B cell (primary cell): ENCODE measurements at regions of chrX and their contacts with region 1.

Region 1: GRCh38 chrX:130079824-130080406 is 30.4 kb downstream of the ELF4 start:
- DNase-seq: peak; percentile 69
- ATAC-seq: no peak
- H3K4me3 ChIP-seq: no peak overlapping the region
- H3K4me3 Mint-ChIP-seq: no peak overlapping the region
- H3K27ac ChIP-seq: no peak overlapping the region
- H3K27ac Mint-ChIP-seq: peak overlapping the region; percentile 47
- H3K4me1 ChIP-seq: peaks cover 32 to 40% of the 10 kb centered on the region in 2 donors
- H3K4me1 Mint-ChIP-seq: peaks cover 41% of the 10 kb centered on the region
- H3K27me3 ChIP-seq: no peaks in the 10 kb centered on the region
- H3K27me3 Mint-ChIP-seq: no peaks in the 10 kb centered on the region
- CTCF ChIP-seq: peak; percentile 72

Region 2: GRCh38 chrX:129786210-129786651 is 293.7 kb before region 1 on chrX:
- CTCF ChIA-PET with region 1: no interaction called
- POLR2A ChIA-PET with region 1: no interaction called
- intact Hi-C with region 1: no loop called
- DNase-seq: peak; percentile 78
- ATAC-seq: peak; percentile 73
- H3K4me3 ChIP-seq: peak overlapping the region in 4 of 5 experiments; percentile 8 to 46 (median 24)
- H3K4me3 Mint-ChIP-seq: peak overlapping the region; percentile 85
- H3K27ac ChIP-seq: peak overlapping the region; percentile 24 to 66
- H3K27ac Mint-ChIP-seq: peak overlapping the region; percentile 95
- H3K4me1 ChIP-seq: peaks cover 60 to 67% of the 10 kb centered on the region in 2 donors
- H3K4me1 Mint-ChIP-seq: peaks cover 59% of the 10 kb centered on the region
- H3K27me3 ChIP-seq: no peaks in the 10 kb centered on the region
- H3K27me3 Mint-ChIP-seq: no peaks in the 10 kb centered on the region
- CTCF ChIP-seq: no peak

Region 3: DNA sequence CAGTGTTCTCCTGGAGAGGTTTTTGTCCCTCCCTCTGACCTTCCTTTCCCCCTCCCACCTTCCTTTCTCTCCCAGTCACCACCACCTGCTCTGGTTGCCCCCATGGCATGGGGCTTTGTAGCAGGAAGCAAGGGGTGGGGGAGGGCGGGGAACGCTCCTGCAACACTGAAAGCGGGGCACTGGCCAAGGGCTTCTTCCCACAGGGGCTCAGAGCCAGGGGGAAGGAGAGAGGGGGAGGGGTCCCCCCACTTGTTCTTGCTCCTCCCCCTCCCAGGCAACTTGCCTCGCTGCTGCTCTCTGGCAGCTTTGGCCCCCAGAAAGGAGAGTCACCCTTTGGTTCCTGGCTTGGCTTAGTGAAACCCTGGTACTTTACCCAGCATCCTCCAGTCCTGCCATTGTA is 49.1 kb before region 1 on chrX:
- CTCF ChIA-PET with region 1: no interaction called
- POLR2A ChIA-PET with region 1: no interaction called
- intact Hi-C with region 1: no loop called
- DNase-seq: no peak
- ATAC-seq: no peak
- H3K4me3 ChIP-seq: no peak overlapping the region
- H3K4me3 Mint-ChIP-seq: no peak overlapping the region
- H3K27ac ChIP-seq: no peak overlapping the region
- H3K27ac Mint-ChIP-seq: no peak overlapping the region
- H3K4me1 ChIP-seq: no peaks in the 10 kb centered on the region
- H3K4me1 Mint-ChIP-seq: peaks cover 2% of the 10 kb centered on the region
- H3K27me3 ChIP-seq: no peaks in the 10 kb centered on the region
- H3K27me3 Mint-ChIP-seq: no peaks in the 10 kb centered on the region
- CTCF ChIP-seq: no peak

Region 4: GRCh38 chrX:130097507-130098209 is 17.7 kb after region 1 on chrX:
- CTCF ChIA-PET with region 1: interaction called, 17 read pairs
- POLR2A ChIA-PET with region 1: interaction called, 9 read pairs
- intact Hi-C with region 1: loop called (anchors 1 kb)
- DNase-seq: no peak
- ATAC-seq: no peak
- H3K4me3 ChIP-seq: no peak overlapping the region
- H3K4me3 Mint-ChIP-seq: no peak overlapping the region
- H3K27ac ChIP-seq: peak overlapping the region in 1 of 2 donors; percentile 48
- H3K27ac Mint-ChIP-seq: peak overlapping the region; percentile 42
- H3K4me1 ChIP-seq: peaks cover 19 to 38% of the 10 kb centered on the region in 2 donors
- H3K4me1 Mint-ChIP-seq: peaks cover 56% of the 10 kb centered on the region
- H3K27me3 ChIP-seq: no peaks in the 10 kb centered on the region
- H3K27me3 Mint-ChIP-seq: no peaks in the 10 kb centered on the region
- CTCF ChIP-seq: no peak

Region 5: GRCh38 chrX:130120746-130121504 is 41.0 kb after region 1 on chrX:
- CTCF ChIA-PET with region 1: interaction called, 164 read pairs
- POLR2A ChIA-PET with region 1: interaction called, 7 read pairs
- intact Hi-C with region 1: loop called (anchors 1 kb)
- DNase-seq: peak; percentile 81
- ATAC-seq: peak; percentile 84
- H3K4me3 ChIP-seq: peak overlapping the region in 4 of 5 experiments; percentile 35 to 62 (median 48)
- H3K4me3 Mint-ChIP-seq: peak overlapping the region; percentile 82
- H3K27ac ChIP-seq: no peak overlapping the region
- H3K27ac Mint-ChIP-seq: no peak overlapping the region
- H3K4me1 ChIP-seq: peaks cover 5 to 15% of the 10 kb centered on the region in 2 donors
- H3K4me1 Mint-ChIP-seq: peaks cover 10% of the 10 kb centered on the region
- H3K27me3 ChIP-seq: no peaks in the 10 kb centered on the region
- H3K27me3 Mint-ChIP-seq: no peaks in the 10 kb centered on the region
- CTCF ChIP-seq: peak; percentile 82

Region 6: GRCh38 chrX:130173190-130173895 is 93.4 kb after region 1 on chrX:
- CTCF ChIA-PET with region 1: interaction called, 23 read pairs
- POLR2A ChIA-PET with region 1: no interaction called
- intact Hi-C with region 1: loop called (anchors 5 kb)
- DNase-seq: peak; percentile 19
- ATAC-seq: no peak
- H3K4me3 ChIP-seq: peak overlapping the region in 3 of 5 experiments; percentile 64 to 74 (median 72)
- H3K4me3 Mint-ChIP-seq: peak overlapping the region; percentile 91
- H3K27ac ChIP-seq: peak overlapping the region in 1 of 2 donors; percentile 66
- H3K27ac Mint-ChIP-seq: peak overlapping the region; percentile 86
- H3K4me1 ChIP-seq: peaks cover 37 to 62% of the 10 kb centered on the region in 2 donors
- H3K4me1 Mint-ChIP-seq: peaks cover 62% of the 10 kb centered on the region
- H3K27me3 ChIP-seq: no peaks in the 10 kb centered on the region
- H3K27me3 Mint-ChIP-seq: no peaks in the 10 kb centered on the region
- CTCF ChIP-seq: no peak

Region 7: DNA sequence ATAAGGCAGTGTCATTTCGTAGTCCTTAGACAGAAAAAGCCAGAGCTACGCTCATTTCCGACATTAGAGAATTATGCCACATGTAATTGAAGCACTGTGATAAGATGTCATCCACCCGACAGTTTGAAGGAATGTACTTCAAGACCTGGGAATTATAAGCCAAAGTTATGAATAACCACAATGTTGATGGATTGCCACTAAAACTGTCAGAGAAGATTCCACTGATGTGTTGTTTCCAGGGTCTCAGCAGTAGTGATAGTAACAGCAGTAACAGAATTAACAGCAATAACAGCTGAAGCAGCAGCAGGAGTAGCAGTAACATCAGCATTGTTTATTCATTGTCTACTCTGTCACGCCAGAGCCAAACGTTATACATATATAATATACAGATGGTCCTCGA is 116.6 kb after region 1 on chrX:
- CTCF ChIA-PET with region 1: interaction called, 84 read pairs
- POLR2A ChIA-PET with region 1: interaction called, 4 read pairs
- intact Hi-C with region 1: loop called (anchors 1 kb)
- DNase-seq: no peak
- ATAC-seq: no peak
- H3K4me3 ChIP-seq: no peak overlapping the region
- H3K4me3 Mint-ChIP-seq: no peak overlapping the region
- H3K27ac ChIP-seq: no peak overlapping the region
- H3K27ac Mint-ChIP-seq: no peak overlapping the region
- H3K4me1 ChIP-seq: no peaks in the 10 kb centered on the region
- H3K4me1 Mint-ChIP-seq: peaks cover 9% of the 10 kb centered on the region
- H3K27me3 ChIP-seq: no peaks in the 10 kb centered on the region
- H3K27me3 Mint-ChIP-seq: no peaks in the 10 kb centered on the region
- CTCF ChIP-seq: no peak